ENCODE measurements at regions of chr13 and their contacts with region 1.

Region 1: DNA sequence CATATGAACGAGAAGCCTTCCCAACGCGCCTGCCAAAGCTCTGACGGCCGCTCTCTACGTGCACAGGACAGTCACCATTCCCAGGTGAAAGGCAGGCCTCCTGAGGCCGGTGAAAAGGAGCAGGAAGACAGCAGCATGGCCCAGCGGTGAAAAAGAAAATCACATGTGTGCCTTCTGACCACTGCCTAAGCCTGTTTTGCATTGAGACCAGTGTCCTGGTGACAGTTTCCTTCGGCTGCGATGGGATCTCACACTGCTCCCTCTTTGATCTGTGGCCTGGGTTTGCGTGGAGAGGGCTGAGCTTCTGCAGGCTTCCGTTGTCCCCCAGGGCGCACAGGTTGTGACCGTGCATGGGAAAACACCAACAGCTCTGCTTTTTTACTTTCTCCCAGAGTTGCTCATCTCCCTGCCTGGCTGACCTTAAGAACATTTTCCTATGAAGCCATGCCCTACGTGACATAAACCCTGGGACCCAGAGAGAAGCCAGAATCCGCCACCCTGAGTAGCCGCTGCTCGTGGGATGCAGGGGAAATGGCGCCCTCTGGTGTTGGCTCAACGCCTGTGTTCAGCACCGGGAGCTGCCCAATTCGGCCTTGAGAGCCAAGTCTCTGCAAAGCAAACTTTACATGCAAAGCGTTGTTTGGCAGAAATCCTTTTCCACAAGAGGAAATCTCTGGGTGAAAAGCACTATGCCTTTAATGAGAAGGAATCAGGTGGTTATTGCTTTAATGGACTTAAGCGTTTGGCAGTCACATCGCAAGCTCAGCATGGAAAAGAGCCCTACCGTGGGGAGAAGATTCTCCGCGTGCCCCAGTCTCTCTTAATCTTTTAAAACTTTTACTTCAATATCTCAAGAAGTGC is 112.2 kb upstream of the GPR12 start:
- DNase-seq: peak; percentile 74
- H3K4me3 ChIP-seq: peak overlapping the region in 1 of 2 experiments; percentile 46; a peak in 2 of 4 replicates
- H3K27ac ChIP-seq: peak overlapping the region in 1 of 2 experiments; percentile 16; a peak in 1 of 4 replicates
- H3K4me1 ChIP-seq: peaks cover 0 to 7% of the 10 kb centered on the region in 2 experiments; a peak in 1 of 4 replicates
- H3K27me3 ChIP-seq: no peaks in the 10 kb centered on the region
- CTCF ChIP-seq: peak; percentile 73
- EP300 ChIP-seq: no peak
- RAD21 ChIP-seq: peak; percentile 84

Region 2: DNA sequence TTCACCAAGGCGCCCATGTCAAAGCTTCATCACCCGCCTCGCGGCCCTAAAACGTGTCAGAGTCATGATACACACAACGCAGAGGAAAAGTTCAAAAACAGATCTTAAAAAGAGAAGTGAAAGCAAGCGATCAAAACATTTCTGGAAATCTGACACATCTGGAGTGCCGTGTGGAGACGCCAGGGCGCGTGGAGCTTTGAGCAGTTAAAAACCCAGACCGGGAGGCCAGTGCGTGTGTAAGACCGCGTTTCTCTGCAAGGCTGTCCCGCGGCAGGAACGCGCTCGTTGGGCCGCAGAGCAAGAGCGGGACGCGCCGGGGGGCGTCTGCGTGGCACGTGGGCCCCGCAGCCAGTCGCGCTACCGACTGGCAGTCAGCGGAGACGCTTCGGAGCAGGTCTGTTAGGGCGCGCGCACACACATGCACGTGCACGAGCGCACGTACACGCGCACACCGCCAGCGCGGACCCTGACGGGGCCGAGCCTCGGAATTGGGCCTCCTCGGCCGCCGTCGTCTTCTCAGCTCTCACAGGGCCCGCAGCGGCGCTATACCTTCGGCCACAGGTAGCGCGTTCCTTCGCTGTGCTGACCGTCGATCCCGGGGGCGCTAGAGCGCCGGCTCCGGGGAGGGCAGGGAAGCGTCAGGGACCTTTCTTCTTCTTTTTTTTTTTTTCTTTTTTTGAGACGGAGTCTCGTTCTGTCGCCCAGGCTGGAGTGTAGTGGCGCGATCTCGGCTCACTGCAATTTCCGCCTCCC is 686.5 kb before region 1 on chr13:
- CTCF ChIA-PET with region 1: interaction called, 27 read pairs
- POLR2A ChIA-PET with region 1: no interaction called
- DNase-seq: peak; percentile 90
- H3K4me3 ChIP-seq: peak overlapping the region; percentile 60 to 63
- H3K27ac ChIP-seq: peak overlapping the region; percentile 12 to 25; a peak in 2 of 4 replicates
- H3K4me1 ChIP-seq: peaks cover 0 to 6% of the 10 kb centered on the region in 2 experiments; a peak in 1 of 4 replicates
- H3K27me3 ChIP-seq: no peaks in the 10 kb centered on the region
- CTCF ChIP-seq: peak; percentile 62
- EP300 ChIP-seq: no peak
- RAD21 ChIP-seq: peak; percentile 37; the same call in 1 of the 2 replicates

Region 3: DNA sequence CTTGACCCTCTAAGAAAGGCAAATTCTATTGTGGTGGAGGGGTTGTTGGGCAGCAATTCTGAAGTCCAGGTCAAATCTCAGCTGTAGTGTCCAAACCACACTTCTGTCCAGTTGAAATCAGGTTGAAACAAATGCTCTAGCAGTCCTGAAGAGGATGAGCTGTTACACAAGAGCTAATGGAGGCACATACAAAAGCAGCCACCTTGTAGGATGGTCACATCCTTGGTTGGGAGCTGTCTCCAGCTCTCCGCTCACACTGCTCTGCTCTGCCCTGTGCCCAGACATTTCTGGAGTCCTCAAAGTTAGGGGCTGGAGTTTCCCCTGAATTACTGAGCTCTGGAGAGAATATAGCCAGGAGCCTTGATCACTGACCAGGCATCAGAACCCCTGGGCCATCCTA is 159.4 kb before region 1 on chr13:
- CTCF ChIA-PET with region 1: interaction called, 170 read pairs
- POLR2A ChIA-PET with region 1: no interaction called
- DNase-seq: no peak
- H3K4me3 ChIP-seq: no peak overlapping the region
- H3K27ac ChIP-seq: no peak overlapping the region
- H3K4me1 ChIP-seq: no peaks in the 10 kb centered on the region
- H3K27me3 ChIP-seq: no peaks in the 10 kb centered on the region
- CTCF ChIP-seq: no peak
- EP300 ChIP-seq: no peak
- RAD21 ChIP-seq: no peak

Region 4: DNA sequence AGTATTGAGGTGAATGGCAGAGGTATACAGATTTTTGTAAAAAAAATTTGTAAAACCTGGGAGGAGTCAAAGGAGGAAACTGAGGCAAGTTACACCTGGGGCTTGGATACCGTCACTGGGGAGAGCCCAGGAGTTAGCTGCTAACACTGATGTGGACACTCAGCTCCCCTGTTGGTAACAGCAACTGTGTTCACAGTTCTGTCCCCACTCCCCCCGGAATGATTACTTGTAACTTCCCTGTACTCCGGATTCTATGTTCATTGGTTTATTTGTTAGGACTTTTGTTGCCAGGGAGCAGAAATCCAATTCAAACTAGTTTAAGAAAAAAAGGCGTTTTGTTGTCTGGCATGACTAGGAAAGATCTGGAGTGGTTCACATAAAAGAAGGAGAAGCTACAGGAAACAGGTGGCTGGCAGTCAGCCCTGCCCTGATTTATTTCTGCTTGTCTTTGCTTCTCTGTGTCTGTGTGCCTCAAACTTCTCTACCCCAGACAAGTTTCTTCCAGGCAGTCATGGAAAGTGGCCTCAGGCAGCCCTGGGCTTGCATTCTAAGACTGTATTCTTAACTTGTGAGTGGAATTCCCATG is 109.9 kb before region 1 on chr13:
- CTCF ChIA-PET with region 1: interaction called, 11 read pairs
- POLR2A ChIA-PET with region 1: no interaction called
- DNase-seq: no peak
- H3K4me3 ChIP-seq: no peak overlapping the region
- H3K27ac ChIP-seq: no peak overlapping the region
- H3K4me1 ChIP-seq: peaks cover 0 to 13% of the 10 kb centered on the region in 2 experiments; a peak in 1 of 4 replicates
- H3K27me3 ChIP-seq: peaks cover 31% of the 10 kb centered on the region
- CTCF ChIP-seq: no peak
- EP300 ChIP-seq: no peak
- RAD21 ChIP-seq: no peak

Region 5: DNA sequence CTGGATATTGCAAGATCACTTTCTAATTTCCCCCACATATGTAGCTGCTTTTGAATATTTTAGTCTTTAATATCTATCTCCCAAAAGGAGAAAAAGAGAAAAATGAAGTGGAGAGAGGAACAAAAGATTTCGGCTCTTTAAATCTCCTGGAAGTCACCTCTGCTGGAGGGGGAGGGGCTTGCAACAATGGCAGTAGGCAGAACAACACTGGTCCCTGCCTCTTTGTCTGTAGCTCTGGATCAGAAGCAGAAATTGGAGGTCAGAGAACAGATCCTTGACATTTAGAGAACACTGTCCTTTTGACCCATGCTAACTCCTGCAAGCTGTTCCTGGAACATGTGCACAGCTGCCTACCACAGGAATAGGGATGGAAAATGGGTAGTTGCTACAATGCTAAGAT is 25.5 kb before region 1 on chr13:
- CTCF ChIA-PET with region 1: interaction called, 46 read pairs
- POLR2A ChIA-PET with region 1: no interaction called
- DNase-seq: no peak
- H3K4me3 ChIP-seq: no peak overlapping the region
- H3K27ac ChIP-seq: no peak overlapping the region
- H3K4me1 ChIP-seq: peaks cover 0 to 5% of the 10 kb centered on the region in 2 experiments; a peak in 1 of 4 replicates
- H3K27me3 ChIP-seq: no peaks in the 10 kb centered on the region
- CTCF ChIP-seq: no peak
- EP300 ChIP-seq: no peak
- RAD21 ChIP-seq: no peak

Region 6: DNA sequence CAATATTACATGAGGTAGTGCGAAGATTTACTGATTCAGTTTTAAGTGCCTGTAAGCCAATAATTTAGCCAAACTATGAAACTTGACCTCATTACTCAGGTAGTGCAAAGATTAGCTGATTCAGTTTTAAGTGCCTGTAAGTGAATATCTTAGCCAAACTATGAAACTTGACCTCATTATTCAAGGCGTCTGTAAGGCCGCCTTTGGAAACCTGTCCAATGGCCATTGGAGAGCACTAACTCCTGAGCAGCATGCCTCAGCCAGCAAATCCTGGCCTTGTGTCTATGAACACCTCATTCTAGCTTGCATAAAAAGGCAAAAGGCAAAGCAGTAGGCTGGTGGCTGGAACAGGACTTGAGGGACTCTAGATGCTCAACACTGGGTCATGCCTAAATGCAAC is 14.8 kb after region 1 on chr13:
- CTCF ChIA-PET with region 1: interaction called, 54 read pairs
- POLR2A ChIA-PET with region 1: no interaction called
- DNase-seq: no peak
- H3K4me3 ChIP-seq: no peak overlapping the region
- H3K27ac ChIP-seq: no peak overlapping the region
- H3K4me1 ChIP-seq: no peaks in the 10 kb centered on the region
- H3K27me3 ChIP-seq: no peaks in the 10 kb centered on the region
- CTCF ChIP-seq: no peak
- EP300 ChIP-seq: no peak
- RAD21 ChIP-seq: no peak

Region 7: DNA sequence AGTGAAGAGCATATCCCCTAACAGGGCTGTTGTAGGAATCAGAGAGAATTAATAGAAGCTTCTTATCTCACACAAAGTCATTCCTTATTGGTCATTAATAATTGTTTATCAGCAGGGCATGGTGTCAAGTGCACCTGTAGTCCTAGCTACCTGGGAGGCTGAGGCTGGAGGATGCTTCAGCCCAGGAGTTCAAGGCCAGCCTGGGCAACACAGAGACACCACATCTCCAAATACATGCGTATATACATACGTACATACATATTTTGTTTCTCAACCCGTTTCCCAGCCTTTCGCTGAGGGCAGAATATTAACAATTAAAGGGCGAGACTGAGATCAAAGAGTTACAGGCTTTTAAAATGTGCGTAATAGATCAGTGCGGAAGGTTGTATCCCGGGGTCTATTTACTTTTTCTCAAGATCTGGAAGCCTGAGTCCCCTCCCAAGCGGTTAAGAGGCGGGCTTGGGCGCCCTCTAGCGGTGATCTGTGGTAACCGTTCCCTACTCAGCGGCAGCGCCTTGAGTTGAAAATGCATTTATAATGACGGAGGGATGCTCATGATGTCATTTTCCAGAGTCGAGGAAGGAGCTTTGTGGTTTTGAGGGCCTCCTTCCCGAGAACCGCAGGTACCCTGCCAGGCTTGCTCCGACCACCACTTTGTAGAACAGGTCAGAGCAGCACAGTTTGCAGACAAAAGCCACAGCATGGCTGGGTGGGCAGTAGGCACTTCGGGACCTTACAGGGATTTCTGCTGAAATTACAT is 57.4 kb after region 1 on chr13:
- CTCF ChIA-PET with region 1: interaction called, 58 read pairs
- POLR2A ChIA-PET with region 1: no interaction called
- DNase-seq: peak; percentile 79
- H3K4me3 ChIP-seq: peak overlapping the region; percentile 31 to 51
- H3K27ac ChIP-seq: no peak overlapping the region
- H3K4me1 ChIP-seq: peaks cover 0 to 2% of the 10 kb centered on the region in 2 experiments; a peak in 1 of 4 replicates
- H3K27me3 ChIP-seq: 0 out of 2 replicates have a peak, but pooled peaks cover 2% of the 10 kb centered on the region
- CTCF ChIP-seq: peak; percentile 97
- EP300 ChIP-seq: no peak
- RAD21 ChIP-seq: peak; percentile 89